HCT116 (cell line): ENCODE measurements at regions of chr15 and their contacts with region 1.

Region 1: GRCh38 chr15:40593588-40594428 is at the start of gene KNL1:
- DNase-seq: peak; percentile 93
- ATAC-seq: peak; percentile 81
- H3K4me3 ChIP-seq: peak within 1 kb of the TSS; percentile 80 to 89
- H3K27ac ChIP-seq: peak within 1 kb of the TSS; percentile 89
- H3K4me1 ChIP-seq: peaks cover 0 to 24% of the 10 kb centered on the region in 2 experiments; a peak in 2 of 4 replicates
- H3K27me3 ChIP-seq: no peaks in the 10 kb centered on the region
- CTCF ChIP-seq: no peak
- POLR2A ChIP-seq: peak; percentile 62
- RAD21 ChIP-seq: no peak
- total RNA-seq, gene KNL1: 30.6 TPM

Region 2: DNA sequence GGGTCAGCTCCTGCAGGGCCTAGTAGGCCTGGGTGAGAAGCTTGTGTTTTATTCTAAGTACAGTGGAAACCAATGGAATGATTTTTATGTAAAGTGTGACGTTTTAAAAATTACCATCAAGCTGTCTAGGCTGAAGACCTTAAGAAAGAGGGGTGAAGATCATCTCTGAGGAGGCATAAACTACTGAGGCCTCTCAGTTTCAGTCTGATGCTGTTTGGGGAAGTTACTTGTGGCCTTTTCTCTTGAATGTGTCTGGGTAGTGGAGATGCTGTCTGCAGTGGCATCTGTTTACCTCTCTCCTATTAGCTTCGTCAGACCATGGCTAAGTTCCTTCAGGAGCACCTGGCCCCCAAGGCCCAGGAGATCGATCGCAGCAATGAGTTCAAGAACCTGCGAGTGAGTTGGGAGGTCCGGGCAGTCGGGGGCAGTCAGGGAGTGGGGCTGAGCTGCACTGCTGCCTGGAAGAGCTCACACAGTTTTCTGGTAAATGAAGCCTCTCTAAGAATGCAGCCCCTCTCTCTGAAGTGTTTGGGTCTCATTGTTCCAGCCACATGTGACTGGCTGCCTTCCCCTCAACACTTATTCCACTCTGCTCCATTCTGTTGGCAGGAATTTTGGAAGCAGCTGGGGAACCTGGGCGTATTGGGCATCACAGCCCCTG is 186.3 kb before region 1 on chr15:
- CTCF ChIA-PET with region 1: no interaction called
- POLR2A ChIA-PET with region 1: no interaction called
- RAD21 ChIA-PET with region 1: no interaction called
- intact Hi-C with region 1: no loop called
- DNase-seq: no peak
- ATAC-seq: no peak
- H3K4me3 ChIP-seq: no peak overlapping the region; a peak in 1 of 4 replicates
- H3K27ac ChIP-seq: no peak overlapping the region
- H3K4me1 ChIP-seq: peaks cover 4 to 16% of the 10 kb centered on the region in 2 experiments; a peak in 3 of 4 replicates
- H3K27me3 ChIP-seq: no peaks in the 10 kb centered on the region
- CTCF ChIP-seq: no peak
- POLR2A ChIP-seq: no peak
- RAD21 ChIP-seq: no peak

Region 3: GRCh38 chr15:40564591-40565332 is 29.0 kb before region 1 on chr15 and contains the start of gene CCDC32:
- CTCF ChIA-PET with region 1: interaction called, 12 read pairs
- POLR2A ChIA-PET with region 1: interaction called, 4 read pairs
- RAD21 ChIA-PET with region 1: no interaction called
- intact Hi-C with region 1: no loop called
- DNase-seq: peak; percentile 97
- ATAC-seq: peak; percentile 94
- H3K4me3 ChIP-seq: peak within 1 kb of the TSS; percentile 85 to 87
- H3K27ac ChIP-seq: peak within 1 kb of the TSS; percentile 76
- H3K4me1 ChIP-seq: peaks cover 4 to 35% of the 10 kb centered on the region in 2 experiments; a peak in 3 of 4 replicates
- H3K27me3 ChIP-seq: no peaks in the 10 kb centered on the region
- CTCF ChIP-seq: no peak
- POLR2A ChIP-seq: no peak
- RAD21 ChIP-seq: no peak
- total RNA-seq, gene CCDC32: 18.6 TPM

Region 4: DNA sequence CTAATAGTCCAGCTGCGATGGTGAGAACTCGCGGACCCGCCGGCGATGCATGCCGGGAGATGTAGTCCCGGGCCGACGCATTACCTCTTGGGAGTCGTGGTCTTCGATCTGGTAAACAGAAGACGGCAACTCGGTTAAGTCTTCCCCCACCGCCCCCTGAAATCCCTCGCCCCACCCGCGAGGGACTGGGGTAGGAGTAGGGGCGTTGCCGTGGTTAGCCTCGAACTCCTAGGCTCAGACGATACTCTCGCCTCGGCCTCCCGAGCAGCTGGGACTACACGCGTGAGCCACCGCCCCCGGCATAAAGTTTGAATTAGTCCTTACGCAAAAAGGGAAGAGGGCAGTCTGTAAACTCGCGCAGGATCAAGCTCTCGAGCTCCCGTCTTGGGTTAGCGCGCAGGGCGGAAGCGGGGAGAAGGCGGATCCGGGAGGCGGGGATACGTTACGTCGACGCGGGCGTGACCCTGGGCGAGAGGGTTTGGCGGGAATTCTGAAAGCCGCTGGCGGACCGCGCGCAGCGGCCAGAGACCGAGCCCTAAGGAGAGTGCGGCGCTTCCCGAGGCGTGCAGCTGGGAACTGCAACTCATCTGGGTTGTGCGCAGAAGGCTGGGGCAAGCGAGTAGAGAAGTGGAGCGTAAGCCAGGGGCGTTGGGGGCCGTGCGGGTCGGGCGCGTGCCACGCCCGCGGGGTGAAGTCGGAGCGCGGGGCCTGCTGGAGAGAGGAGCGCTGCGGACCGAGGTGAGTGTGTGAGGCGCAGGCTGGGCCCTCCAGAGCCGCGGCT is 101.1 kb after region 1 on chr15 and contains the start of gene RAD51:
- CTCF ChIA-PET with region 1: interaction called, 12 read pairs
- POLR2A ChIA-PET with region 1: interaction called, 4 read pairs
- RAD21 ChIA-PET with region 1: no interaction called
- intact Hi-C with region 1: no loop called
- DNase-seq: peak; percentile 87
- ATAC-seq: peak; percentile 94
- H3K4me3 ChIP-seq: peak within 1 kb of the TSS; percentile 82 to 92
- H3K27ac ChIP-seq: peak within 1 kb of the TSS; percentile 95
- H3K4me1 ChIP-seq: peaks cover 11 to 28% of the 10 kb centered on the region in 2 experiments; a peak in 3 of 4 replicates
- H3K27me3 ChIP-seq: no peaks in the 10 kb centered on the region
- CTCF ChIP-seq: no peak
- POLR2A ChIP-seq: peak; percentile 65
- RAD21 ChIP-seq: no peak
- total RNA-seq, gene RAD51: 20.9 TPM